MCF 10A (cell line): ENCODE measurements at regions of chr2 and their contacts with region 1.

Region 1: DNA sequence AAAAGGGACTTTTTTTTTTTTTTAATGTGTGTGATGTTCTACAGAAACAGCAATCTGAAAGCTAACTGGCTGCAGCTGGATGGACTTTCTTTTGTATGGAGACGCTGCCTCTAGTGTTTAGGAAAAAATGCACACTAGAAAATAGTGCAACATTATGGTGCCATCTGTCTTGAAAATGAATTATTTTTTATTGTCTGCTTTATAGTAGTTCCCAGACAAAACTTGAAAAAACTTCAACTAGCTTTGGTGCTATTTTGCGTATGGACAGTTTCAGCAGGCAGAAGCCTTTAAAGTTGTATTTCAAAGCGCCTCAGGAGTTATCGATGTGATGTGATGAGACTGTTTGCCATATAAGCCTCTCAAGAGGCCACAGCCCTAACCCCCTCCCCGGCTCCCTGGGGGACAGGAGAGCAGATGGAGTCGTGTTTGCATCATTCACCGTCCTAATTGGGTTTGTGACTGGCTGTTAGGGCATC is 86.9 kb downstream of the LTBP1 start:
- DNase-seq: peak; percentile 45
- H3K4me3 Mint-ChIP-seq: no peak overlapping the region
- H3K27ac Mint-ChIP-seq: no peak overlapping the region
- H3K4me1 Mint-ChIP-seq: no peaks in the 10 kb centered on the region
- H3K27me3 Mint-ChIP-seq: no peaks in the 10 kb centered on the region
- CTCF ChIP-seq: peak; percentile 62

Region 2: DNA sequence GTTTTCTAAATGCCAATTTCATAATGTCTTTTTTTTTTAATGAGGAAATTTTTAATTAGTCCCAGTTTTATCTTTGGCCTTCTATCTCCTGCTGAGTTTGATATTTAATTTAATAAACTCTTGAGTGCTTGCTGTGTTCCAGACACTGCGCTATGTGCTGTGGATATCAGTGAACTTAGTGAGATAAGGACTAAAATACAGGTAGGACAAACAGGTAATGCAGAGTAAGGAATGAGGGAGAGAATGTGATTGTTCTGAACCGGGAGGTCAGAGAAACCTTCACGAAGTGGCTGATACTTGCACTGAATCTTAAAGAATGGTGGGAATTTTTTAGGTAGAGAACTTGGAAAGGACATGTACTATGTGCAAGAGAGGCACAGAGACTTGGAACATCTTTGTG is 377.6 kb before region 1 on chr2:
- CTCF ChIA-PET with region 1: interaction called, 12 read pairs
- POLR2A ChIA-PET with region 1: no interaction called
- intact Hi-C with region 1: no loop called
- DNase-seq: no peak
- H3K4me3 Mint-ChIP-seq: no peak overlapping the region
- H3K27ac Mint-ChIP-seq: no peak overlapping the region
- H3K4me1 Mint-ChIP-seq: no peaks in the 10 kb centered on the region
- H3K27me3 Mint-ChIP-seq: no peaks in the 10 kb centered on the region
- CTCF ChIP-seq: no peak

Region 3: GRCh38 chr2:32824070-32824809 is 209.4 kb before region 1 on chr2:
- CTCF ChIA-PET with region 1: interaction called, 11 read pairs
- POLR2A ChIA-PET with region 1: no interaction called
- intact Hi-C with region 1: no loop called
- DNase-seq: no peak
- H3K4me3 Mint-ChIP-seq: no peak overlapping the region
- H3K27ac Mint-ChIP-seq: no peak overlapping the region
- H3K4me1 Mint-ChIP-seq: peaks cover 7% of the 10 kb centered on the region
- H3K27me3 Mint-ChIP-seq: no peaks in the 10 kb centered on the region
- CTCF ChIP-seq: no peak

Region 4: DNA sequence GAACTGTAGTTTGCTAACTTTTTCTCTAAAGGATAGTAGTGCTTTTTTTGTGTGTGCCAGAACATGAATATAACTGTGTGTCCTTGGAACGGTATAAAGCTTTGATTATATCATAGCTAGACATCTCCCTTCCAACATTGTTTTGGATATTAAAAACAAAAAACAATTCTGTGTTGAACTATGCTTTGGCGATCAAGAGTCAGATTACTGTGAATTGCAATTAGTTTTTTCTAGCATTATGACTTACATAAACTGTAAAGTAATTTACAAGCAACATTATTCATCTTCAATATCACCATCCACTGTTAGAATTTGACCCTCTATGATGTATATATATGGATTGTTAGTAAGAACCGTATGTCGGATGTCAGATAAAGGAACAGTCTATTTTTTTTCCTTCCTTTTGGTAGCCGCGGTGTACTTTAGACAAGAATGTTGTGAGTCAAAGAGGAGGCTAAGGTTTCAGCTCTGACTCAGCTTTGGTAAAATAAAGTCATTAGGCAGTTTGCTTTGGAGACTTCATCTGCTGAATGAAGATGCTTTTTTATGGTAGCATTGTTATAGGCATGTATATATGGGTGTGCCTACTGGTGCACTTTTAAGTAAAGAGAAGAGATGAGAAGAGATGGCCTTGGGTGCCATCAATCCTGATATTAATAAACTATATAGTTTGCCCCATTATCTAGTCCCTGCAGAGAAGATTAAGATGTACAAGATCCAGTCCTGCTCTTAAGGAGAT is 10.5 kb before region 1 on chr2:
- CTCF ChIA-PET with region 1: interaction called, 72 read pairs
- POLR2A ChIA-PET with region 1: no interaction called
- intact Hi-C with region 1: no loop called
- DNase-seq: peak; percentile 59
- H3K4me3 Mint-ChIP-seq: no peak overlapping the region
- H3K27ac Mint-ChIP-seq: no peak overlapping the region
- H3K4me1 Mint-ChIP-seq: peaks cover 6% of the 10 kb centered on the region
- H3K27me3 Mint-ChIP-seq: no peaks in the 10 kb centered on the region
- CTCF ChIP-seq: no peak

Region 5: DNA sequence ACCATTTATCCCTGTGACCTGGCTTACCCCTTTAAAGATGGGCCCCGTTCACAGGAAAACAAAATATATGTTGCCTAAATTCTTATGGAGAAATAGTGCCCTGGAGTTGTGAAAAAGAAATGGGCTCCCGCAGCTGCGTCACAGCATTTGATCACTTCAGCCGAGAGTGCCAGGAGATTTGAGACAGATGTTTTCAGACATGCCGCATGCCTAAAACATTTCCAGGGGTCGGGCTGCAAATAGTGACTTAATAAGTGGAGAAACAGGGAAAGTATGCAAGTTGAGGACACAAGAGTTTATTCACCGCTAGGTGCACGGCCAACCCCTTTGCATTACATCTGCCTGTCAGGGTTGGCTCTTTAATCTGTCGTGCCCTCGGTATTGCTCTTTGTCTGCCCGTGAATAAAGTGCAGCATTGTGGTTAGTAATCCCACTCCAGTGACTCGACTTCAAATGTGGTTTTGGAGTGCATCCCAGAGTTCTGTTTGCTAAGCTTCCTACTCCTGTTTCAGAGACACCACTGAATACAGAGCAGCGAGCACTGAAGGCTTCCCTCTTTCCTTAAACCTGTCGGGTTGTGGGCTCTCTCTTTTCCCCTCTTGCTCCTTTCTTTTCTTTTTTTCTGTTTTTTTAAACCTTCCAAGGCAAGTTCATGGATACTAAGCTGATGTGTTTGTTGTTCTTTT is 100.6 kb after region 1 on chr2:
- CTCF ChIA-PET with region 1: interaction called, 3 read pairs
- POLR2A ChIA-PET with region 1: no interaction called
- intact Hi-C with region 1: loop called (anchors 2 kb)
- DNase-seq: peak; percentile 96
- H3K4me3 Mint-ChIP-seq: peak overlapping the region; percentile 91
- H3K27ac Mint-ChIP-seq: peak overlapping the region; percentile 93
- H3K4me1 Mint-ChIP-seq: peaks cover 42% of the 10 kb centered on the region
- H3K27me3 Mint-ChIP-seq: no peaks in the 10 kb centered on the region
- CTCF ChIP-seq: no peak

Region 6: GRCh38 chr2:33372940-33373553 is 339.4 kb after region 1 on chr2:
- CTCF ChIA-PET with region 1: interaction called, 38 read pairs
- POLR2A ChIA-PET with region 1: no interaction called
- intact Hi-C with region 1: loop called (anchors 1 kb)
- DNase-seq: peak; percentile 73
- H3K4me3 Mint-ChIP-seq: no peak overlapping the region
- H3K27ac Mint-ChIP-seq: no peak overlapping the region
- H3K4me1 Mint-ChIP-seq: peaks cover 13% of the 10 kb centered on the region
- H3K27me3 Mint-ChIP-seq: no peaks in the 10 kb centered on the region
- CTCF ChIP-seq: peak; percentile 72

Region 7: DNA sequence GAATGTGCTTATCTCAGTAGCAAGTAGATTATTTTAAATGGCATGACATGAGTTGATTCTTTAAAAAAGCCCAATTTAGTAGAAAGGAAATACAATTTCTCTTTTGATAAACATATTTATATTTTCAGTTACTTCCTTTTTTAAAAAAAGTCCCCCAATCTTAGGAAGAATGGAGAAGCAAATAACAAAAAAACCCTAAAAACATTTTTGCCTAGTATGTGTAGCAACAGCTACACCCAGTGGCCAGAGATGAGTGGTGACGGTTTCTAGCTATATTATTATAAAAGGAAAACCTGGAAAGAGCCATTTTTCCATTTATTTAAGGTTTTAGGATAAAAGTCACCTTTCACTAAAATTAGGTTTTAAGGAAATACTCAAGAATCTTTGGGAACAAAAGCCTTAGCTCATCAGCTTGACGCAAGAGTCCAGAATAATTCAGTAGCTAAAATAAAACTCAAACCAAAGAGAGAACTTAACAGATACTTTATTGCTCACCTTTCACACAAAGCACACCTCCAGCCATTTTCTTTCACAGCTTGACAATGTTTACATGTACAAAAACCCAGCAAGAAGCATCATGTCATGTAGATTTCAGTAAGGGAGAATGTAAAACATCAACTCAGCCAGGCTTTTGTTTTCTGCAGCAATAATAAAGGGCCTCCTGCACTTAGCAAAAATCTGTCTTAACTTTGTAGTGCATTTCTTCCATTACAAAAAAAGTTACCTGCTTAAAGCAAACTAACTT is 549.7 kb after region 1 on chr2:
- CTCF ChIA-PET with region 1: interaction called, 14 read pairs
- POLR2A ChIA-PET with region 1: no interaction called
- intact Hi-C with region 1: loop called (anchors 5 kb)
- DNase-seq: peak; percentile 49
- H3K4me3 Mint-ChIP-seq: no peak overlapping the region
- H3K27ac Mint-ChIP-seq: no peak overlapping the region
- H3K4me1 Mint-ChIP-seq: no peaks in the 10 kb centered on the region
- H3K27me3 Mint-ChIP-seq: no peaks in the 10 kb centered on the region
- CTCF ChIP-seq: peak; percentile 76